Esophagus muscularis mucosa (tissue), 4 donors: ENCODE measurements at regions of chr7 and their contacts with region 1.

Region 1: GRCh38 chr7:71237945-71238344 is 106.0 kb downstream of the GALNT17 start:
- DNase-seq: no peak
- H3K4me3 ChIP-seq: no peak overlapping the region
- H3K27ac ChIP-seq: peak overlapping the region; percentile 81 to 87 (median 85)
- H3K4me1 ChIP-seq: peaks cover 36 to 63% (median 63%) of the 10 kb centered on the region in 4 donors
- H3K27me3 ChIP-seq: no peaks in the 10 kb centered on the region
- CTCF ChIP-seq: peak; percentile 60 to 72 (median 66)
- EP300 ChIP-seq: no peak
- POLR2A ChIP-seq: no peak

Region 2: GRCh38 chr7:71221549-71221948 is 16.4 kb before region 1 on chr7:
- intact Hi-C with region 1: no loop called
- DNase-seq: no peak
- H3K4me3 ChIP-seq: no peak overlapping the region
- H3K27ac ChIP-seq: peak overlapping the region; percentile 80 to 89 (median 87)
- H3K4me1 ChIP-seq: peaks cover 6 to 32% (median 28%) of the 10 kb centered on the region in 4 donors
- H3K27me3 ChIP-seq: no peaks in the 10 kb centered on the region
- CTCF ChIP-seq: no peak
- EP300 ChIP-seq: peak; percentile 74
- POLR2A ChIP-seq: no peak

Region 3: GRCh38 chr7:71278257-71278656 is 40.3 kb after region 1 on chr7:
- intact Hi-C with region 1: loop called (anchors 5 kb)
- DNase-seq: no peak
- H3K4me3 ChIP-seq: no peak overlapping the region
- H3K27ac ChIP-seq: peak overlapping the region; percentile 77 to 83 (median 80)
- H3K4me1 ChIP-seq: peaks cover 19 to 43% (median 34%) of the 10 kb centered on the region in 4 donors
- H3K27me3 ChIP-seq: no peaks in the 10 kb centered on the region
- CTCF ChIP-seq: no peak
- EP300 ChIP-seq: peak; percentile 44
- POLR2A ChIP-seq: no peak

Region 4: GRCh38 chr7:71308096-71308495 is 70.2 kb after region 1 on chr7:
- intact Hi-C with region 1: loop called (anchors 10 kb)
- DNase-seq: no peak
- H3K4me3 ChIP-seq: peak overlapping the region in 2 of 4 donors; percentile 1 to 14
- H3K27ac ChIP-seq: peak overlapping the region; percentile 80 to 88 (median 85)
- H3K4me1 ChIP-seq: peaks cover 18 to 66% (median 60%) of the 10 kb centered on the region in 4 donors
- H3K27me3 ChIP-seq: no peaks in the 10 kb centered on the region
- CTCF ChIP-seq: no peak
- EP300 ChIP-seq: no peak
- POLR2A ChIP-seq: no peak

Region 5: GRCh38 chr7:71424166-71425035 is 186.5 kb after region 1 on chr7:
- intact Hi-C with region 1: loop called (anchors 10 kb)
- DNase-seq: no peak
- H3K4me3 ChIP-seq: no peak overlapping the region
- H3K27ac ChIP-seq: peak overlapping the region in 2 of 4 donors; percentile 13 to 33
- H3K4me1 ChIP-seq: peaks cover 2 to 13% (median 7%) of the 10 kb centered on the region in 4 donors
- H3K27me3 ChIP-seq: no peaks in the 10 kb centered on the region
- CTCF ChIP-seq: no peak
- EP300 ChIP-seq: no peak
- POLR2A ChIP-seq: no peak

Region 6: GRCh38 chr7:71808115-71808514 is 570.2 kb after region 1 on chr7:
- intact Hi-C with region 1: no loop called
- DNase-seq: no peak
- H3K4me3 ChIP-seq: no peak overlapping the region
- H3K27ac ChIP-seq: no peak overlapping the region
- H3K4me1 ChIP-seq: no peaks in the 10 kb centered on the region
- H3K27me3 ChIP-seq: no peaks in the 10 kb centered on the region
- CTCF ChIP-seq: no peak
- EP300 ChIP-seq: no peak
- POLR2A ChIP-seq: no peak